MCF 10A (cell line): ENCODE measurements at regions of chr22 and their contacts with region 1.

Region 1: GRCh38 chr22:44625981-44626687 is 75.9 kb upstream of the PRR5 start:
- DNase-seq: peak; percentile 67
- H3K4me3 Mint-ChIP-seq: no peak overlapping the region
- H3K27ac Mint-ChIP-seq: no peak overlapping the region
- H3K4me1 Mint-ChIP-seq: no peaks in the 10 kb centered on the region
- H3K27me3 Mint-ChIP-seq: peaks cover 27% of the 10 kb centered on the region
- CTCF ChIP-seq: peak; percentile 97

Region 2: GRCh38 chr22:43826142-43827002 is 799.8 kb before region 1 on chr22:
- CTCF ChIA-PET with region 1: no interaction called
- POLR2A ChIA-PET with region 1: no interaction called
- intact Hi-C with region 1: loop called (anchors 10 kb)
- DNase-seq: peak; percentile 18
- H3K4me3 Mint-ChIP-seq: no peak overlapping the region
- H3K27ac Mint-ChIP-seq: no peak overlapping the region
- H3K4me1 Mint-ChIP-seq: no peaks in the 10 kb centered on the region
- H3K27me3 Mint-ChIP-seq: peaks cover 63% of the 10 kb centered on the region
- CTCF ChIP-seq: peak; percentile 29

Region 3: GRCh38 chr22:43884600-43885325 is 741.4 kb before region 1 on chr22:
- CTCF ChIA-PET with region 1: interaction called, 4 read pairs
- POLR2A ChIA-PET with region 1: no interaction called
- intact Hi-C with region 1: loop called (anchors 5 kb)
- DNase-seq: peak; percentile 59
- H3K4me3 Mint-ChIP-seq: no peak overlapping the region
- H3K27ac Mint-ChIP-seq: no peak overlapping the region
- H3K4me1 Mint-ChIP-seq: no peaks in the 10 kb centered on the region
- H3K27me3 Mint-ChIP-seq: peaks cover 31% of the 10 kb centered on the region
- CTCF ChIP-seq: peak; percentile 83

Region 4: DNA sequence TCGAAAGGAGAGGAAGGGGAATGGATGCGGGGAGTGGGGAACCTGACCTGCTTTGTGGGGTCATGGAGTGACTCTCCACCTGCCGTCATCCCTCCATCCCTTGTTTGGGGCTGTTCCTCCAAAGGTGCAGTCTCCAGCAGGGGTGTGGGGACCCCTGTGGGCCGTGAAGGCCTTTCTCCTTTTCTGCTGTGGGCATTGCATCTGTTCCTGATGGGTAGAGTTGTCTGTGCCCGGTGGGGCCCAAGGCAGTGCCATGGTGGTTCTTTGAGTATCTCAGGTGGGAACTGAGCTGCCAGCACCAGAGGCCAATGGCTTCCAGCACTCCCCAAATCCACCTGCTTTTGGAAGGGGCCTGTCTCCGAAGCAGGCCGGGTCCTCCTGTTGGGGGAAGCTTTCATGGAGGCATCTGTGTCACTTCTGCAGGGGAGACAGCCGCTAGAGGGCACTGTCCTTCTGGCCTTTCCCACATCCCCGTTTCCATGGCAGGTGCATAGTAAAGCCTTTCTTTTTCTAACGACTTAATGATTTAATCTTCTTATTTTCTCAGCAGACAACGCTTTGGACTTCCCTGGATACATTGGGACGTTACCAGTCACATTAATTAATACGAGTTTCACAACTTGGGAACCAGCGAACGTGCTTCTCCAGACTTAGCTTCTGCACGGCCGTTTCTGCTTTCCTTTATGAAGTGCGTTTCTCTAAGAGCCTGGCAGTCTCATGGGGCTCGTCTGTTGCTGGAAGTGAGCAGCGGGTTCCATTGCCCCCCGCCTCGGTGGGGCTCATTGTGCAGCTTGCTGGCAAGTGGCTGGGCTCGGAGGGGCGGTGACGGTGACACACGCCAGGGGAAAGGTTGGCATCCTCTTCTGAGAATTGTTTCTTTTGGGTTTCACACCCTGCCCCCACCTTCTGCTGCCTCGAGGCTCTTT is 544.9 kb before region 1 on chr22:
- CTCF ChIA-PET with region 1: interaction called, 72 read pairs
- POLR2A ChIA-PET with region 1: no interaction called
- intact Hi-C with region 1: loop called (anchors 1 kb)
- DNase-seq: peak; percentile 68
- H3K4me3 Mint-ChIP-seq: no peak overlapping the region
- H3K27ac Mint-ChIP-seq: no peak overlapping the region
- H3K4me1 Mint-ChIP-seq: peaks cover 8% of the 10 kb centered on the region
- H3K27me3 Mint-ChIP-seq: no peaks in the 10 kb centered on the region
- CTCF ChIP-seq: peak; percentile 77

Region 5: DNA sequence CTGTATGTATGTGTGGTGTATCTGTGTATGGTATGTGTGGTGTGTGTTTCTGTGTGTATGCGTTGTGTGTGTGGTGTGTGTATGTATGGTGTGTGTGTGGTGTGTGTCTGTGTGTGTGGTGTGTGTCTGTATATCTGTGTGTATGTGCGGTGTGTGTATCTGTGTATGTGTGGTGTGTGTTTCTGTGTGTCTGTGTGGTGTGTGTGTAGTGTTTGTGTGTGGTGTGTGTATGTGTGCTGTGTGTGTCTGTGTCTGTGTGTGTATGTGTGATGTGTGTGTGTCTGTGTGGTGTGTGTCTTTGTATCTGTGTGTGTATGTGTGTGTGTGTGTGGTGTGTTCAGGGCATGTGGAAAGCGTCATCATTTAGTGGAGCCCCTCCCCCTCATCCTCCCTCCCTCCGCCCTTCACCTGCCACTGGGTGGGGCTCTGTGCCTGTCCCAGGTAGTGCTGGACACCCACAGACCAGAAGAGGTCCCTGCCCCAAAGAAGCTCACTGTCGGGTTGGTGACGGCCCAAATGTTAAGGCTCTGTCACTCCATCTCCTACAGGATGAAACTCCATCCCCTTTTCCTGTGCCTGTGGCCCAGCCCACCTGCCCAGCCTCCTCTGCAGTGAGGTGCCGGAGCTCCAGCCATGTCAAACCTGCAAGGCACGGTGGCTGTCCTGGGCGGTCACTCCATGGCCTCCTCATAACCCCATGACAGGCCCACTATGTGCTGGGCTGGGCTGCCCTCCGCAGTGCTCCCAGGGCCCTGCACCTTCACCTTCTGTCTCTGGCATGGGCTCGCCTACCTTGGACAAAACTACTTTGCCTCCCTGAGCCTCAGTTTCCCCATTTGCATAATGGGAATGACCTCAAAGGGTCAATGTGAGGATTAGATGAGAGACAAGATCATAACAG is 290.0 kb before region 1 on chr22:
- CTCF ChIA-PET with region 1: no interaction called
- POLR2A ChIA-PET with region 1: no interaction called
- intact Hi-C with region 1: loop called (anchors 1 kb)
- DNase-seq: peak; percentile 49
- H3K4me3 Mint-ChIP-seq: no peak overlapping the region
- H3K27ac Mint-ChIP-seq: no peak overlapping the region
- H3K4me1 Mint-ChIP-seq: peaks cover 6% of the 10 kb centered on the region
- H3K27me3 Mint-ChIP-seq: peaks cover 13% of the 10 kb centered on the region
- CTCF ChIP-seq: peak; percentile 17

Region 6: GRCh38 chr22:44684506-44685383 is 58.6 kb after region 1 on chr22:
- CTCF ChIA-PET with region 1: interaction called, 6 read pairs
- POLR2A ChIA-PET with region 1: no interaction called
- intact Hi-C with region 1: loop called (anchors 2 kb)
- DNase-seq: peak; percentile 92
- H3K4me3 Mint-ChIP-seq: peak overlapping the region; percentile 37
- H3K27ac Mint-ChIP-seq: peak overlapping the region; percentile 80
- H3K4me1 Mint-ChIP-seq: peaks cover 20% of the 10 kb centered on the region
- H3K27me3 Mint-ChIP-seq: no peaks in the 10 kb centered on the region
- CTCF ChIP-seq: peak; percentile 96